HAP-1 (cell line): ENCODE measurements at regions of chr13 and their contacts with region 1.

Region 1: DNA sequence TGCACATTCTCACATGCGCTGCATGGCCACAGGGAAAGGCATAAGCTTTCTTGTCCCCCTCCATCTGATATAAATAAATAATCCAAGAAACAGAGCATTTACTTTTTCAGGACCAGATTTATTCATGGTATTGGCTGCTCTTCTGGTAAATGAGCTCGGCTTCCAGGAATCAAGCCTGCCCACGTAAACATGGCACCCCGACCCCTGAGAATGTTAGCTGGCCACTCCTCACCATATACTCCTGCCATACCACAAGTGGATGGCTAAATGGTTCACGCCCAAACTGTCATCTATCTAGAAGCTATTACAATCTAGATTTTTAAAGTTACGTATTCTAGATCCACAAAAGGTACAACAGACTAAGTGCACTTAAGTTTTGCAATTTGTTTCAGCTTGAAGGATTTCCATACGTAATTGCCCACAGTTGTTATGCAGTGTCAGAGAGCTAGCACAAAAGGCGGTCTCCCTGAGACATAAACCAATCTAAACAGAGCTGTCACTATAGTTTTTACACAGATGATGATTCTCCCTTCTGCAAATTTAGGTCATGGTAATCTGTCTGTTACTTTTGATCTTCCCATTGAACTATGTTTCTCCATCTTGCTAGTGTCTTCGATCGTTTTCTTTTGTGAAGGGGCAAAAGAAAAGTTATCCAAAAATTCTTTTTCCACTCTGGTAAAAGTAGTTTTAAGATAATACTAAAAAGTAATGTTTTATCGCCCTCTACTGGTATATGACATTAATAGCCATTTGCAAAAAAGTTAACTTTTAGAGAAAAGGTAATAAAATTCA is 16.2 kb upstream of the FOXO1 start:
- DNase-seq: peak; percentile 50 to 84
- H3K4me3 ChIP-seq: peak overlapping the region; percentile 1; the same call in 1 of the 2 replicates
- H3K4me1 ChIP-seq: peaks cover 40% of the 10 kb centered on the region
- H3K27me3 ChIP-seq: no peaks in the 10 kb centered on the region

Region 2: DNA sequence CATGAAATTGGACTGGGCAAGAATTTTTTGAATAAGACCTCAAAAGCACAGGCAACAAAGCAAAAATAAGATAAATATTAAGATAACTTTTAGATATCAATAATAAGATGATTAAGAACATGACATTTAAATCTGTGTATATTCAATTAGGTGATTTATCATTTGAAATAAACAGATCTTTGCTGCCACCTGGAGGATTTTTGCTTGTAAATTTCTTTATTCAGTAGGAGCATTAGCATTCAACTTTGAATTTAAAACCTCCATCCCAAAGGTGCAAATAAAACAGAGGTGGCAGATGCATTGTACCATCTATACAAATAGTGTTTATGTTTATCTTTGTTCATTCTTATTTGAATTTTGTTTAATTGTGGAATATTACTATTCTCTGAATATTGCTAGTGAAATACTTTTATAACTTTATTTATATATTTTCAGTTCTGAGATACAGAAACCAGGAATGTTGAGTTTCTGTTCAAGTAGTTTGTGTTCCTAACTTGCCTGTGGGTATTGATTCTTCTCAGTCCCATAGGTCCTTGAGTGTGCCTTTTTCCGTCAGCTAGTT is 1006.2 kb before region 1 on chr13:
- in situ Hi-C with region 1: loop called (anchors 25 kb)
- DNase-seq: peak; percentile 34 to 54
- H3K4me3 ChIP-seq: no peak overlapping the region
- H3K4me1 ChIP-seq: no peaks in the 10 kb centered on the region
- H3K27me3 ChIP-seq: no peaks in the 10 kb centered on the region

Region 3: DNA sequence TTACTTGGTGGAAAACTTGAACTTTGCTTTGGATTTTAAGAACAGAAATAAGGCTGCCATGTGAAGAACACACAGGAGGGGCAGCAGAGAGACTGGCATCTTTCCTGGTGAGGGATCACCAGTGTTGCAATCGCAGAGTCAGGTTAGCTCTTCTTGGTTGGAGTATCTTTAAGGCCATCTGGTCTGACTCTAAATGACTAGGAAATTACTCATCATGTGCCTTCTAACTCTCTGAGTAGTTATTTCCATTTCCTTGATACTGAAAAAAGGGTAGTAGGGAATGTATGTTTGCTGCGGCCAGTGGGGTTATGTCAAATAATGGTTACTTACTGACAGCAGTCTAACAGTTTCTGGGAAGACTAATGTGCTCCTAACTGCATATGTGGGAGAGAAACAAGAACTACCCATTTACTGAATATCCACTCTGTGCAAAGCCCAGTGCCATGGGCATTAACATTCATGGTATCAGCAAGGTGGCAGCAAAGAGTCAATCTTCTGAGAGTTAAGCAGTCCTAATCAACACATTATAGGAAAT is 905.1 kb before region 1 on chr13:
- in situ Hi-C with region 1: loop called (anchors 25 kb)
- DNase-seq: peak; percentile 4 to 24
- H3K4me3 ChIP-seq: no peak overlapping the region
- H3K4me1 ChIP-seq: no peaks in the 10 kb centered on the region
- H3K27me3 ChIP-seq: no peaks in the 10 kb centered on the region

Region 4: DNA sequence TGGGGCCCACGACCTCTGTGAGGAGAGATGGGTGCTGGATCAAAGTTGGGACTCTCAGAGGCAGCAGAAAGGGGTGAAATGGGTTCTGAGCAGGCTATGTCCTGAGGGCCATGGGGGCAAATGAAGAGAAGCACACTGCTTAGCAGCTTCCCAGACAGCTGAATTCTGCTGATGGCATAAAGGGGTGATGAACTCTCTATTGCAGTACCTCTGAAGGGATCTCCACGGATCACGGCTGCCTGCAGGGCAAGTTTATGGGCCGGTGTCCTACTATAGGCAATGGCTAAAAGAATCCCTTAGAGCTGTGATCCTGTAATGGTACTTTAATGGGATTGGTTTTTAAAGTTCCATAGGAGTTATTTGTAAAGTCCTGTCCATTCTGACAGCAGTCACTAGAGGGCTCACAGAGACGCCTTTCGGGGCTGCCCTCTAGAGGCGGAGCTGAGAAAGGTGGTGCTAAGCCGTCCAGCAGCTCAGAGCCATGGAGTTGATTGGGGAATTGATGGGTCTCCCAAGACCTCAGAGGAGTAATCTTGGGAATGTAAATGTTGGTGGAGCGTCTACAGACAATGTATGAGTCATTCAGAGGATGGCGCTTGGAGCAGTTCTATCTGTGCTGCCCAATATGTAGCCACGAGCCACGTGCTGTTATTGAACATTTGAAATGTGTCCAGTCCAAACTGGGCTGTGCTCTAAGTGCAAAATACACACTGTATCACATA is 739.9 kb before region 1 on chr13:
- in situ Hi-C with region 1: loop called (anchors 25 kb)
- DNase-seq: peak; percentile 85 to 87
- H3K4me3 ChIP-seq: no peak overlapping the region
- H3K4me1 ChIP-seq: peaks cover 8% of the 10 kb centered on the region
- H3K27me3 ChIP-seq: no peaks in the 10 kb centered on the region